ENCODE measurements at regions of chr19 and their contacts with region 1.

Region 1: DNA sequence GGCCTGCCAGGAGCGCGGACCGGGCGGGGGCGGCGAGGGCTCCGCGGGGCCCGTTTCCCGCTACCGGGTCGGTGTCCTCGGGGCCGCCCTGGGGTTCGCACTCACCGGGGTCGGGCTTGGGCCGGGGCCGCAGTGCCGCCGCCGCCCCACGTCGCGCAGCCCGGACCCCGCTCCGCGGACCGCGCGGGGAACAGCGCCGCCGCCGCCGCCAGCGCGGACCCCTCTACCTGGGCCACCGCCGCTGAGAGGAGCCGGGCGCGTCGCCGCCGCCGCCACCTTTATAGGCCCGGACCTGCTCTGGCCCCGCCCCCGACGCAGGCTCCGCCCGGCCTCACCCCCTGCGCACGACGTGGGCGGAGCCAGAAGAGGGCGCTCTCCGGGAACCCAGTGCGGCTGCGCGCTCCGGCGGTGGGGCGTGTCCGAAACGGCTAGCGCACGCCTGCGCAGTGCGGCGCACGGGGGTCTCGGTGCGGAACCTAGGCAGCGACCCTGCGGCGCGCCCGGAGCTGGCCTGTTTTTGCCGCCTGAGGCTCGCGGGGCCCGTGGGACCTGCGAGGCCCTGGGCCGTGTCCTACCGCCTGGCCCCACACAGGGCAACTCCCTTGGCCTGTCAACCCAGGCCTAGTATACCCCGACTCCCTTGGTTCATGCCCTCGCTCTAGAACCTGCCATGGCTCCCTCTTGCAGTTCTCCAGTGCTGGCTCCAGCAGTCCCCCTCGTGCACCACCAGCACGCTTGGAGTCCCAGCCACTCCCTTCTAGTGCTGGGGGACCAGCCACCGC is at the start of gene MKNK2:
- DNase-seq: no peak
- ATAC-seq: peak; percentile 72
- H3K4me3 ChIP-seq: peak within 1 kb of the TSS; percentile 92
- H3K27ac ChIP-seq: peak within 1 kb of the TSS; percentile 85
- H3K4me1 ChIP-seq: peaks cover 73 to 89% of the 10 kb centered on the region in 2 experiments
- H3K27me3 ChIP-seq: no peaks in the 10 kb centered on the region
- CTCF ChIP-seq: peak in 1 of 3 experiments; percentile 54; a peak in 3 of 6 replicates
- POLR2A ChIP-seq: peak; percentile 99
- RAD21 ChIP-seq: no peak
- total RNA-seq, gene MKNK2: 271 TPM

Region 2: GRCh38 chr19:2032296-2032941 is 18.8 kb before region 1 on chr19:
- CTCF ChIA-PET with region 1: interaction called, 3 read pairs
- POLR2A ChIA-PET with region 1: interaction called, 14 read pairs
- RAD21 ChIA-PET with region 1: no interaction called
- intact Hi-C with region 1: no loop called
- DNase-seq: peak; percentile 84
- ATAC-seq: peak; percentile 64
- H3K4me3 ChIP-seq: peak overlapping the region; percentile 36 to 57
- H3K27ac ChIP-seq: peak overlapping the region; percentile 93
- H3K4me1 ChIP-seq: peaks cover 62 to 82% of the 10 kb centered on the region in 2 experiments
- H3K27me3 ChIP-seq: no peaks in the 10 kb centered on the region
- CTCF ChIP-seq: no peak
- POLR2A ChIP-seq: no peak
- RAD21 ChIP-seq: no peak